ENCODE measurements at regions of chr12 and their contacts with region 1.

Region 1: GRCh38 chr12:57005980-57006808 is at the start of gene ZBTB39:
- DNase-seq: peak; percentile 92
- CTCF ChIP-seq: peak; percentile 71

Region 2: DNA sequence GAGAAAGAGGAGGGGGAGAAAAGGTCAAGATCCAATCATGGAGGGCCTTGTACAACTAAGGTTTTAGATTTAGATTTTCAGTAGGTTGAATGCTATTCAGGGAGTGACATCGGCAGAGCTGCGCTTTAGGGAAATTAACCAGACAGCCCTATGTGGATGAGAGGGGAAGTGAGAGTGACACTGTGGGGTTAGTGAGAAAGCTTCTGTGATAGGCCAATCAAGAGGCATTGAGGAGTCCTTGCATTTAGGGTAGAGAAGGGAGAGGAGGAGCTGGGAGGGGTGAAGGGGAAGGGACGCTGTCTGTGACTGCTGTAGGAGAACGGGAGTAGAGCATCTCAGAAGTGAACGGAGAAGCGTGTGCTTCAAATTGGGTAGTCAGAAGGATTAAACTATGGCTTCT is 239.7 kb before region 1 on chr12:
- CTCF ChIA-PET with region 1: interaction called, 148 read pairs
- POLR2A ChIA-PET with region 1: no interaction called
- DNase-seq: peak; percentile 81
- CTCF ChIP-seq: no peak

Region 3: GRCh38 chr12:56851462-56851861 is 154.7 kb before region 1 on chr12:
- CTCF ChIA-PET with region 1: no interaction called
- POLR2A ChIA-PET with region 1: no interaction called
- DNase-seq: no peak
- CTCF ChIP-seq: no peak

Region 4: DNA sequence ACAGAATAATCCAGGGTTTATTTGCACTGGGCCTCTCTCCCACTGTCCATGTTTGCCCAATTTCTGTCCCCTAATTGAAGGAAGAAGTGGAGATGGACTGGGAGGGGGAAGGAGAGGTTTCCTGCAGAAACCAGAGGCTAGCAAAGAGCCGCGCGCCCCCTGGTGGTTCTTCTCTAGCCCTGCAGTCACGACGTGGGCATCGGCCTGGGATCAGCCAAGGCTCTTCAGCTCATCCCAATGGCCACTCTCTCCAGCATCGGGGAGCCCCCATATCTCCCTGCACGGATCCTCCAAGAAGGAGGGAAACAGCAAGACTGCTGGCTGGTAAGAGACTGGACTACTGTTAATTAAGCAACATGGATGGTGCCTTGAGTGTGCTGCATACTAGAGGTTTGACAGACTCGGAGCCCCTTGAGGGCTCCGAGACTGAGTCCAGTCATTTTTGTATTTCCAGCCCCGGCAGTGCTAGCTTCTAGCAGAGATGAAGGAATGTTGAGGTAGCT is 18.6 kb before region 1 on chr12:
- CTCF ChIA-PET with region 1: interaction called, 122 read pairs
- POLR2A ChIA-PET with region 1: interaction called, 3 read pairs
- DNase-seq: peak; percentile 81
- CTCF ChIP-seq: peak; percentile 92

Region 5: GRCh38 chr12:57031138-57031725 is 25.0 kb after region 1 on chr12:
- CTCF ChIA-PET with region 1: interaction called, 16 read pairs
- POLR2A ChIA-PET with region 1: no interaction called
- DNase-seq: peak; percentile 61
- CTCF ChIP-seq: no peak

Region 6: DNA sequence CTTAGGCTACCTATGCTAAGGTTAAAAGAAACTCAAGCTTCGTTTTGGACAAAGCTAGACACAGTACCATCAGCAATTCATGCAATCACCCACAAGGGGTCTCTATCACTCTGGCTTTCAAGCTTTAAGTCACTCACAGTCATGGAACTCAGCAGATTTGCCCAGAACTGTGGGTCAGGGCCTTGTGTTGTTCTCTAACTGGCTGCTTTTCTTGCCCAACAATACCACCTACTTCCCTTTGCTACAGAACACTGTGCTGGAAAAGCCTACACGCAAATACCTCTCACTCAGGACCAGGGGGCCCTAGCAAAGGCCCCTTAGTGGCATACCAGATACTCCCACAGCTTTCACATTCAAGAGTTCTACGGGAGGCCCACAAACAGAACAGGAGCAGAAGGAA is 63.3 kb after region 1 on chr12:
- CTCF ChIA-PET with region 1: interaction called, 11 read pairs
- POLR2A ChIA-PET with region 1: no interaction called
- DNase-seq: peak; percentile 65
- CTCF ChIP-seq: peak; percentile 75

Measured in GM10248 (cell line).